ENCODE measurements at regions of chr10 and their contacts with region 1.

Region 1: DNA sequence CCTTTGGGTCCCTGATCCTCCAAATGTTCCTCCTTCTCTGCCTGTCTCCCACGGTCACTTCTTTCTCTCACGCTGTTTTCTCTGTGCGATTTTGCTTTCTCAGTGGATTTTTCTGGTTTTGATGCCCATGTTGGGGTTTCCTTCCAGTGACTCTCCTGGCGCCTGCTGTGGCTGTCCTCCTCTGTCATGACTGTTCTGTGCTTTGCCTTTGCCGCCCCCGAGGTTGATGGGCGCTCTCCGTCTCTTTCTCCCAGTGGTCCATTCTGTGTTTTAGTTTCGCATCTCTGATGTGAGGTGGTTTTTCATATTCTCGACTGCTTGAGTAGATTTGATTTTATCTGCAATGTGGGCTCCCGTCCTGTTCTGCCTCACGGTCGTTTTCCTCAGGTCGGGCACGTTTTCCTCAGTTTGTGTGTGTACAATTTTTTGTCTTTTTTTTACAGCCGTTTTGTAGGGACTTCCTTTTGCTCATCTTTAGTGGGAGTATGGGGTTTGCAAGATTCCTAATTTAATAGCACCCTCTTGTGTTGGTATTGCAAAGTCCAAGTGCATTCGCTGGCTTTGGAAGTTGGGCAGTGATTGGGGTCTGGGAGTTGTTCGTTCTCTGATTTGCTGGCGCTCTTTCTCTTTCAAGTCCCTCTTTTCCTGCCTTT is 100.0 kb downstream of the INPP5A start:
- DNase-seq: peak; percentile 49 to 57 (median 53)
- H3K4me3 ChIP-seq: no peak overlapping the region
- H3K4me3 Mint-ChIP-seq: peak overlapping the region in 1 of 2 donors; percentile 64
- H3K27ac ChIP-seq: no peak overlapping the region
- H3K27ac Mint-ChIP-seq: peak overlapping the region in 1 of 7 donors; percentile 7
- H3K4me1 ChIP-seq: peaks cover 4% of the 10 kb centered on the region in 2 donors
- H3K4me1 Mint-ChIP-seq: peaks cover 12% of the 10 kb centered on the region
- H3K27me3 ChIP-seq: no peaks in the 10 kb centered on the region
- H3K27me3 Mint-ChIP-seq: peaks cover 0 to 2% (median 0%) of the 10 kb centered on the region in 3 donors
- CTCF ChIP-seq: peak; percentile 71

Region 2: GRCh38 chr10:132382231-132382922 is 255.2 kb before region 1 on chr10:
- intact Hi-C with region 1: loop called in 1 of 2 experiments (anchors 5 kb)
- DNase-seq: peak in 2 of 3 donors; percentile 24 to 32
- H3K4me3 ChIP-seq: no peak overlapping the region
- H3K4me3 Mint-ChIP-seq: no peak overlapping the region
- H3K27ac ChIP-seq: no peak overlapping the region
- H3K27ac Mint-ChIP-seq: peak overlapping the region in 3 of 7 donors; percentile 8 to 55 (median 16)
- H3K4me1 ChIP-seq: peaks cover 26 to 50% of the 10 kb centered on the region in 2 donors
- H3K4me1 Mint-ChIP-seq: peaks cover 49% of the 10 kb centered on the region
- H3K27me3 ChIP-seq: no peaks in the 10 kb centered on the region
- H3K27me3 Mint-ChIP-seq: peaks cover 0 to 7% (median 3%) of the 10 kb centered on the region in 3 donors
- CTCF ChIP-seq: no peak

Region 3: DNA sequence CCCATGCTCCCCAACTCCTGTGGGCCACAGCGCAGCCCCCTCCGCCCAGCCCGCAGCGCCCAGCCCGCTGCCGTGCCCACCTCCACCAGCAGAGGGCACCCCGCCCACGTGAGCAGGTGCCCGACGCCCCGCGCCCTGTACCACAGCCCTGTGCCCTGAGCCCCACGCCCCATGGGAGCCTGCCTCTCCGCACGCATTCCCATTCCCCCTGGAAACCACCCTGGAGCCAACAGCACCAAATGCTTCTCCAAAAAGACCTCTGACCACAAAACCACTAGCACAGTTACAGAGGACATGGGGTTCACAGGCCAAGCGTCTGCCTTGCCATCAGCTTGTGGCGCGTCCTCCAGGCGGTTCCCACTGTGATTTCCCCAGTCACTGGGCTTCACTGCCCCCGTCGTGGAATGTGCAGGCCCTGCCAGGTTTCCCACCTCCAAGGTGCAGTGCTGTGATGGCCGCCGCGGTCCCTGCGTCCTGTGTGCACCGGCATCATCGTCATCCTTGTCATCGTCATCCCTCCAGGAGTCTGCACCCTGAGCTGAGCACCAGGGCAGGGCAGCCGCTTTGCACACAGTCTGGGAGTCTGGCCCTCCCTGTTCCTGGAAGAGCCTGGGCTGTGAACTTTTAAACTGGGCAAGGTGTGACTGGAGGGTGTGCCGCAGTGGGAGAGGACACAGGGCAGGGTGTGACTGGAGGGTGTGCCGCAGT is 178.9 kb before region 1 on chr10:
- intact Hi-C with region 1: loop called (anchors 1 kb)
- DNase-seq: peak; percentile 43 to 71 (median 49)
- H3K4me3 ChIP-seq: no peak overlapping the region
- H3K4me3 Mint-ChIP-seq: no peak overlapping the region
- H3K27ac ChIP-seq: no peak overlapping the region
- H3K27ac Mint-ChIP-seq: peak overlapping the region in 2 of 7 donors; percentile 15 to 25
- H3K4me1 ChIP-seq: peaks cover 0 to 8% of the 10 kb centered on the region in 2 donors
- H3K4me1 Mint-ChIP-seq: peaks cover 4% of the 10 kb centered on the region
- H3K27me3 ChIP-seq: peaks cover 0 to 2% of the 10 kb centered on the region in 2 donors
- H3K27me3 Mint-ChIP-seq: peaks cover 5 to 15% (median 8%) of the 10 kb centered on the region in 3 donors
- CTCF ChIP-seq: peak; percentile 94

Region 4: DNA sequence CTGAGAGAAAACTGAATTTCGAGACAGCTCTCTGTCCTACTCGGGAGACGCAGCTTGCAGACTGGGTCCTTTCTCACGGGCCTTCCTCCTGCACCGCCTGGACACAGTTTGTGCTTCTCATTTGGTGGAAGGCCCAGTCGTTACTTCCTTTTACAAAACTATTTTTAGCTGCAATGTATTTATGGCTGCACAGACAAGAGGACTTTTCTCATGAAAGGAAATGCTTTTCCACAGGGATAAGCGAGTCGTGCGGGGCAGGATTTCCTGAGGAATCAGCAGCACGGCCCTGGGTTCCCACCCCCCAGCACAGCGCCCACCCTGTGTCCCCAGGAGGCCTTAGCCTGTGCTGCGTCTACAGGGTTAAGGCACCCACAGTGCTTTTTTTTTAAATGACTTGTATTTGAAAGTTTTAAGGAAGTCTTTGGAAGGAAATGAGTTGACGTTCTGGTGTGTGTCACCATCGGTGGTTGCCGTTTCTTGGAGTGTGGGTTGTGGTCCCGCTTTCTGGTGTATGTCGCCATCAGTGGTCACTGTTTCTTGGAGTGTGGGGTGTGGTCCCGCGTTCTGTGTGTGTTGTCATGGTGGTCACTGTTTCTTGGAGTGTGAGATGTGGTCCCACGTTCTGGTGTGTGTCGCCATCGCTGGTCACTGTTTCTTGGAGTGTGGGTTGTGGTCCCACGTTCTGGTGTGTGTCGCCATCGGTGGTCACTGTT is 49.1 kb before region 1 on chr10:
- intact Hi-C with region 1: loop called in 1 of 2 experiments (anchors 5 kb)
- DNase-seq: peak; percentile 97 to 99 (median 98)
- H3K4me3 ChIP-seq: peak overlapping the region; percentile 6 to 63 (median 25)
- H3K4me3 Mint-ChIP-seq: peak overlapping the region; percentile 62 to 83
- H3K27ac ChIP-seq: peak overlapping the region; percentile 91 to 95
- H3K27ac Mint-ChIP-seq: peak overlapping the region; percentile 98 to 99 (median 99)
- H3K4me1 ChIP-seq: peaks cover 80% of the 10 kb centered on the region in 2 donors
- H3K4me1 Mint-ChIP-seq: peaks cover 83% of the 10 kb centered on the region
- H3K27me3 ChIP-seq: no peaks in the 10 kb centered on the region
- H3K27me3 Mint-ChIP-seq: peaks cover 0 to 24% (median 8%) of the 10 kb centered on the region in 3 donors
- CTCF ChIP-seq: no peak

Region 5: GRCh38 chr10:132826524-132827422 is 189.2 kb after region 1 on chr10:
- intact Hi-C with region 1: no loop called
- DNase-seq: peak in 1 of 3 donors; percentile 1
- H3K4me3 ChIP-seq: no peak overlapping the region
- H3K4me3 Mint-ChIP-seq: no peak overlapping the region
- H3K27ac ChIP-seq: no peak overlapping the region
- H3K27ac Mint-ChIP-seq: no peak overlapping the region
- H3K4me1 ChIP-seq: no peaks in the 10 kb centered on the region
- H3K4me1 Mint-ChIP-seq: no peaks in the 10 kb centered on the region
- H3K27me3 ChIP-seq: no peaks in the 10 kb centered on the region
- H3K27me3 Mint-ChIP-seq: peaks cover 4 to 7% (median 6%) of the 10 kb centered on the region in 3 donors
- CTCF ChIP-seq: no peak

Region 6: GRCh38 chr10:132910901-132911785 is 273.5 kb after region 1 on chr10:
- intact Hi-C with region 1: no loop called
- DNase-seq: no peak
- H3K4me3 ChIP-seq: no peak overlapping the region
- H3K4me3 Mint-ChIP-seq: no peak overlapping the region
- H3K27ac ChIP-seq: no peak overlapping the region
- H3K27ac Mint-ChIP-seq: no peak overlapping the region
- H3K4me1 ChIP-seq: no peaks in the 10 kb centered on the region
- H3K4me1 Mint-ChIP-seq: no peaks in the 10 kb centered on the region
- H3K27me3 ChIP-seq: no peaks in the 10 kb centered on the region
- H3K27me3 Mint-ChIP-seq: peaks cover 4 to 6% (median 5%) of the 10 kb centered on the region in 3 donors
- CTCF ChIP-seq: no peak